ENCODE measurements at regions of chr16 and their contacts with region 1.

Region 1: DNA sequence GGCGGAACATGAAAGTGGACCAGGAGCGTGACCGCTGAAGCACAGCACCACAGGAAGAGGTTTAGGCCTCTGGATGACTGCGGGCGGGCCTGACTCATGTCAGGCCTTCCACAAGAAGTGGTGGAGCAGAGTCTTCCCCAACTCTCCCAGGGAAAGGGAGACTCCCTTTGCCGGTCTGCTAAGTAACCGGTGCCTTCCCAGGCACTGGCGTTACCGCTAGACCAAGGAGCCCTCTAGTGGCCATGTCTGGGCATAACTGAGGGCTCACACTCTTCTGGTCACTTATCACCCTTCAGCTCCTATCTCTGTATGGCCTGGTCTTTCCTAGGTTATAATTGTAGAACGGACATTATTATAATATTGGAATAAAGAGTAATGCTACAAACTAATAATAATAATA is 1931.9 kb downstream of the TP53TG3F start:
- DNase-seq: peak; percentile 6
- ATAC-seq: no peak
- H3K4me3 ChIP-seq: no peak overlapping the region
- H3K27ac ChIP-seq: no peak overlapping the region
- H3K4me1 ChIP-seq: no peaks in the 10 kb centered on the region
- H3K27me3 ChIP-seq: no peaks in the 10 kb centered on the region
- CTCF ChIP-seq: peak in 2 of 3 experiments; percentile 58 to 75; a peak in 4 of 6 replicates
- POLR2A ChIP-seq: no peak
- RAD21 ChIP-seq: no peak; the same call in 1 of the 2 replicates

Region 2: DNA sequence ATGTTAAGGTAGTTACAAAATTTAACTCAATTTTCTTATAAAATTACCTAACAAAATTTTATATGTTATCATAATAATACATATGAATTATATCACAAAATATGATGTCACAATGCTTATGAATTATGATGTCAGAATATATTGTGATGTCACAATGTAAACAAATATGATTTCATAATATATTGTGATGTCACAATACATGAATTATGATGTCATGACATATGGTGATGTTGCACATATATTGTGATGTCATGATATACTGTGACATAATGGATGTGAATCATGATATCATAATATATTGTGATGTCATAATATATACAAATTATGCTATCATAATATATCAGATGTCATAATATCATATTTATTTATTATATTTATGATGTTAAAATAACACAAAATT is 52.0 kb before region 1 on chr16:
- CTCF ChIA-PET with region 1: no interaction called
- POLR2A ChIA-PET with region 1: no interaction called
- RAD21 ChIA-PET with region 1: no interaction called
- intact Hi-C with region 1: loop called (anchors 10 kb)
- DNase-seq: no peak
- ATAC-seq: no peak
- H3K4me3 ChIP-seq: no peak overlapping the region
- H3K27ac ChIP-seq: no peak overlapping the region
- H3K4me1 ChIP-seq: no peaks in the 10 kb centered on the region
- H3K27me3 ChIP-seq: no peaks in the 10 kb centered on the region
- CTCF ChIP-seq: no peak
- POLR2A ChIP-seq: no peak
- RAD21 ChIP-seq: no peak

Region 3: DNA sequence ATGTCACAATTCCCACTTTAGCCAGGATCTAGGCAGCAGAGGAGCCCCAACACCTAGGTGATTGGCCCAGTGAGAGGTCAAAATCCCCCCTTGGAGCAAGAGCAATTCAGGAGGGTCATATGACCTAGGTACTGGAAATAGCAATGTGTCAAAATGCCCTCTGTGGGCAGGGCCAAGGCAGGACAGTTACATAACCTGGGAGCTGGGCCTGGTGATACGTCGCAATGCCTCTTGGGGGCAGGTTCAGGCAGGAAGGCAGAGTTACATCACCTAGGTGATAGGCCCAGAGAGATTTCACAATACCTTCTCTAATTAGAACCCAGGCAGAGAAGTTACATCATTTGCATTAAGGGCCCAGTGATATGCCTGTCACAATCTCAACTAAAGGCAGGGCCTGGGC is 25.7 kb before region 1 on chr16:
- CTCF ChIA-PET with region 1: no interaction called
- POLR2A ChIA-PET with region 1: no interaction called
- RAD21 ChIA-PET with region 1: no interaction called
- intact Hi-C with region 1: no loop called
- DNase-seq: no peak
- ATAC-seq: no peak
- H3K4me3 ChIP-seq: no peak overlapping the region
- H3K27ac ChIP-seq: no peak overlapping the region
- H3K4me1 ChIP-seq: no peaks in the 10 kb centered on the region
- H3K27me3 ChIP-seq: no peaks in the 10 kb centered on the region
- CTCF ChIP-seq: no peak
- POLR2A ChIP-seq: no peak
- RAD21 ChIP-seq: no peak

Measured in HCT116 (cell line).